ENCODE measurements at regions of chr11 and their contacts with region 1.

Region 1: DNA sequence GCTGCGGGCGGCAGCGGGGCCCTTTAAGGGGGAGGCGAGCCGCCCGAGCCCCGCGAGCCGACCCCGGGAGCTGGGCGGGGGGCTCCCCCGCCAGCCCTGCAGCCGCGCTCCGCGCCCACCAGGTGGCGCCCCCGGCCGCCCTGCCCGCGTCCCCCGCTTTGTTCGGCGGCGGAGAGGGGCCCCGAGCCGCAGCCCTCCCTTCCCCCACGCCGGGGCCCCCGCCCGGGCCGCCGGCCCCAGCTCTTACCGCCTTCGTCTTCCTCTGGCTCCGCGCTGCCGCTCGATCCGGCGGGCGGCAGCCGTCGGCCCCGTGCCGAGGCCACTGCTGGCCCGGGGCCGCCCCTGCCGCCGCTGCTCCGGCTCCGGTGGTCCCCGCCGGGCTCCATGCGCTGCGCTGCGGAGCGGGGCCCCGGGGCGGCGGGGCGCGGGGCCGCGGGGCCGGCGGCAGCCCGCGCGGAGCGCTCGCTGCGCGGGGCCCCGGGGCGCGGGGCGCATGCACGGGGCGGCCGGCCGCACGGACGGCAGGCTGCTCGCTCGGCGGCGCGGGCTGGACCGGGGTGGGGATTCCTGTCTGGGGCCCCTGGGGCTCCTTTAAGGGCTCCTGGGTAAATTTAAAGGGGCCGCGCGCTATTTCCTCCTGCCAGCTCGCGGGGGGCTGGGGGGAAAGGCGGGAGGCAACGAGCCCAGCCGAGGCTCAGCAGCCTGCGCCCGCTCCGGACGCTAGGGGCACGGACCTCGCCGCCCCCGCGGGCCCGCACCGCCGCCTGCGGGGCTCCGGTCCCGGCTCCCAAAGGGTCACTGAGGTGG is at the start of gene ZFTA:
- DNase-seq: peak; percentile 80
- ATAC-seq: peak; percentile 39
- total RNA-seq, gene ZFTA: 12.6 TPM

Region 2: DNA sequence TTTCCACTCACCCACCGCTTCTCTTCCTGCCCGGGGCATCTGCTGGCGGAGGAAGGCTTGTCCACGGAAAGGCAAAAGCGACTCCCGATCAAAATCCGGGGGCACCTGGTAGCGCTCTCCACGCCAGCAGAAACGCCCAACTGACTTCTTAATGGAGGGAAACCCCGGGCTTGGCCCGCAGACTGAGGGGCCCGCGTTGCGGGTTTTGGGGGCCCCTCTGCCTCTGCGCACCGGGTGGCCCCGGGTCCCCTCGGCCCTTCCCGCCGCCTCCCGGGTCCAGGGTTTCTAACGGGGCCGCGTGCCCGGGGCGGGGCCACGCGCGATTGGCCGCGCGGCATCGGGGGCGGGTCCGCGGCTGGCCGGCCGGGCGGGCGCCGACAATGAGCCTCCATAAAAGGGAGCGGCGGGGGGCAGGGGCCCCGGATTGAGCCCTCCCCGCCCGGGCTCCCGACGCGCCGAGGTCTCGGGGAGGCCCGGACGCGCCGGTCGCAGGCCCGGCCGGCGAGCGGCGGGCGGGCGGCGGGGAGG is 44.7 kb after region 1 on chr11 and contains the start of gene SPINDOC:
- intact Hi-C with region 1: loop called (anchors 1 kb)
- DNase-seq: peak; percentile 90
- ATAC-seq: peak; percentile 95
- total RNA-seq, gene SPINDOC: 11.9 TPM

Region 3: DNA sequence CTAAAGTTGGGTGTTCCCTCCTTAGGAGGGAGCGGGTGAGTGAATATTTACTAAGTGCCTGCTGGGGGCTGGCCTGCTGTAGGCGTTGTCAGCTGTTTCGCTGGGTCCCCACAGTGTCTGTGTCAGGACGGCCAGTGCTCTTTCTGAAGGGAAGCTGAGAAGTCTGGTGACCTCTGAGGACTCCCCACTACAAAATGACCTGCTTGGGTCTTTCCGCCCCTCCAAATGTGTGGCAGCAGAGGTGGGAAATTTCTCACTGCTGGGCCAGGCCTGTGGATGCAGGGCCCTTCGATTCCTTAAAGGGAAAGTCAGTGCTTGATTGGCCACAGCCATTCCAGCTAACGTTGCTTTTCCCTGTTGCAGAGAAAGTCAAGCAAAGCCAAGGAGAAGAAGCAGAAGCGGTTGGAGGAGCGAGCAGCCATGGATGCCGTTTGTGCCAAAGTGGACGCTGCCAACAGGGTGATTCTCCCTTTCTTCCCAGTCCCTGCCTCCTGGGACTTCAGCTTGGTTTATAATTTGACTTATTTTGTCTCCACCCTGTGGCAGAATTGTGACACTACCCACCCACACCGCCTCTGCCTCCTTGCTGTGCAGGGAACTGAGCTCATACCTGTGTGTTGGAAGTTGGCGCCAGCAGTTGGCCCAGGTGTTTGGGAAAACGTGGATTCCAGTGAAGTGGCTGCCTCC is 177.2 kb after region 1 on chr11:
- intact Hi-C with region 1: loop called (anchors 5 kb)
- DNase-seq: peak; percentile 71
- ATAC-seq: peak; percentile 84

Region 4: DNA sequence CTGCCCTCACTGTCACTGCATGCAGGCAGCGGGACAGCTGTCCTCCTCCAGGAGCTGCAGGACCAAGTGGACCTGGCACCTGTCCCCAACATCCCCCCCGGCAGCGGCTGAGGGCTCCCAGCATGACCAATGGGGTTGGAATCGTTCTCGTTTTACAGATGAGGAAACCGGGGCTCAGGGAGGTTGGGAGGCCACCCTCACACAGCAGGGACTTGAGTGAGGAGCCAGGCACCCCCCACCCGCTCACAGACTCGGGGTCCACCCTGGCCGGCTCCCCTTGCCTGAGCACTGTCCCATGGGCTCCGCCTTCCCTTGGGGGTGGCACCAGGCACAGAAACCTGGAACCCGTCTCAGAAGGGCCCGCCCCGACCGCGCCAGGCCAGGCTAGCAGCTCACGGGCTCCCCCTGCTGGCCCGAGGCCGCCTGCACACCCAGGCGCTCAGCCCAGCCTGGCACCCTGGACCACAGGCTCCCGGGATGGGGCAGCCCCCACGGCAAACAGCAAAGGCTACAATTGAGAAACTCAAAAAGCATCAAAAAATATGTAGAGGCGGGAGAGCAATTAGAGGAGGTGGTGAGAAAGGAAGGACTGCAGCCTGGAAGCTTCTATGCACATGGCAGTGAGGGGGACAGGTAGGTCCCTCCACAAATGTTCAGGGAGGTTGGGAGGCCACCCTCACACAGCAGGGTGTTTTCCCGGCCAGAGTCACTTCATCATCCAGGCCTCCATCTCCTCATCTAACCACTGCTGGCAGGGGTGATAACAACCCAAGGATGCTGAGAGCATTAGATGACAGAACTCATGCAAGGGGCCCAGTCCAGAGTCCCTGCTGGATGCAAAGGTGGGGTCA is 384.6 kb after region 1 on chr11:
- intact Hi-C with region 1: loop called (anchors 10 kb)
- DNase-seq: peak; percentile 92
- ATAC-seq: peak; percentile 51

Measured in Right ventricle myocardium inferior (tissue), 1 donor.